H1 (cell line): ENCODE measurements at regions of chr17 and their contacts with region 1.

Region 1: DNA sequence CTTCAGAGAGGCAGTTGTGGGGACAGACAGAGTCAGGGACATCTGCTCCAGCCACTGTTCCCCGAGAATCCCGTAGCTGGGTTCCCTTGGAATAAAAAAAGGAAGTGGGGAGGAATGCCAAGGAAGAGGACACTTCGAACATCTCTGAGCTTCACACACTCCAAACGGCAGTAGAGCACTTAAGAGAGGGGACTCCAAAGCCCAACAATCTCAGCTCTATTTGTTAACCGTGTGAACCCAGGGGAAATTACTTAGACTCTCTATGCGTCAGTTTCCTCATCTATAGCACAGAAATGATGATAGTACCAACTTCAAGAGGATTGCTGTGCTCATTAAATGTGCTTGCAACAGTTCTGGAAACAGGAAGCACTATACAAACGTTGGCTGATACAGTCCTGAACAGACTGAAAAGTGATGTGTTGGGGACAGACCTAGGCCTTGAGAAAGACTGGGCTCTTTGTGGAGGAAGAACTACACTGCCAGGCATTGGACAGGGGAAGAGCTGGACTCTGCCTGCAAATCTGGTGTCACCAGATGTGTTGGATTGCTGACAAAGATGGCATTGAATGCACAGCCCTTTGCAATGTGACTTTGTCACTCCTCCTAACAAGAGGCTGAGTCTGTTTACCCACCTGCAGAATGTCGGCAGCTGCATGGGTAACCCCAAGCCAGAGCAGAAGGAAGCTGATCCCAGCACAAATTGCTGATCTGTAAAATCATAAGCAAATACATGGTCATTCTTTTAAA is 12.2 kb upstream of the ST6GALNAC2 start:
- DNase-seq: no peak
- H3K4me3 ChIP-seq: no peak overlapping the region
- H3K27ac ChIP-seq: no peak overlapping the region
- H3K4me1 ChIP-seq: peaks cover 0 to 7% (median 3%) of the 10 kb centered on the region in 4 experiments; a peak in 3 of 7 replicates
- H3K27me3 ChIP-seq: no peaks in the 10 kb centered on the region; a peak in 2 of 7 replicates
- CTCF ChIP-seq: no peak
- EP300 ChIP-seq: no peak
- POLR2A ChIP-seq: no peak
- RAD21 ChIP-seq: no peak

Region 2: DNA sequence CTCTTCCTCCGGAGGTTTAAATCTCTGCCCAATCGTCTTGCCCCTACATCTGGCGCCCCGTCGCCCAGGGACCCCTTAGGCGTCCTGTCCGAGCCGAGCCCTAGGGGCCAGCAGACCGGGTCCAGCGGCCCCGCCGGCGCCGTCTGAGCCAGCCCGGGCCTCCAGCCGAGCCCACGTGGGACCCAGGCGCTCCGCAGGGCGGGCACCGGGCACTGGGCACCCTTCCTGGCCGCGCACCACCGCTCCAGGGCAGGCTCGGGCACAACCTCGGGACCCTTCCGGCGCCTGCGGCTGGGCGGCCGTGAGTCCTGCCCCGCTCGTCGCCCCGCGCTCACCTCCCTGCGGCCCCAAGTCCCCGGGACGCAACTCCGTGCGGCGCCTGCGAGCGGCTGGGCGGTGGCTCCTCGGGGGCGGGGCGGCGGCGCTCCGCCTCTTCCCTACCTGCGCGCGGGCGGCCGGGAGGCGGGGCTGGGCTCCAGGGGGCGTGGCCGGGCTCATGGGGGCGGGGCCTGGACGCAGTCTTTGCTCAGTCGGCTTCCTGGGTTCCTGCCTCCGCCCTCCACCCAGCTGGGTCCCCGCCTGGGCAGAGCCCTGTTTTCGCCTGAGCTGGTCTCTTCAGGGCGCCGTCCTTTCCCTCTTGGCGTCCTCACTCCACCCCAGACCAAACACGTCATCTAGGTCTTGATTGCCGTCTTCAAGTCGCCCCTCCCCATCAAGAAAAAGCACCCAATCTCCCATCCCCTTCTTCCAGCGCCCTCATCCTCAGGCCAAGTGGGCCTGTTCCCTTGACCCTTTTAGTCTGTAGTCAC is 96.7 kb before region 1 on chr17 and contains the start of gene RHBDF2:
- CTCF ChIA-PET with region 1: no interaction called
- POLR2A ChIA-PET with region 1: no interaction called
- DNase-seq: peak; percentile 65 to 100
- H3K4me3 ChIP-seq: peak within 1 kb of the TSS; percentile 62 to 82 (median 76)
- H3K27ac ChIP-seq: no peak within 1 kb of the TSS
- H3K4me1 ChIP-seq: peaks cover 11 to 43% (median 34%) of the 10 kb centered on the region in 4 experiments
- H3K27me3 ChIP-seq: no peaks in the 10 kb centered on the region
- CTCF ChIP-seq: no peak
- EP300 ChIP-seq: no peak
- POLR2A ChIP-seq: peak in 1 of 2 experiments; percentile 71; a peak in 2 of 3 replicates
- RAD21 ChIP-seq: no peak
- total RNA-seq, gene RHBDF2: 25.9 and 26.2 TPM in 2 replicates

Region 3: GRCh38 chr17:76585818-76586593 is 11.9 kb before region 1 on chr17 and contains the start of gene ST6GALNAC2:
- CTCF ChIA-PET with region 1: interaction called, 14 read pairs
- POLR2A ChIA-PET with region 1: interaction called, 4 read pairs
- DNase-seq: peak in 1 of 2 experiments; percentile 67
- H3K4me3 ChIP-seq: peak within 1 kb of the TSS; percentile 42 to 81 (median 48)
- H3K27ac ChIP-seq: no peak within 1 kb of the TSS
- H3K4me1 ChIP-seq: peaks cover 0 to 22% (median 10%) of the 10 kb centered on the region in 4 experiments; a peak in 6 of 7 replicates
- H3K27me3 ChIP-seq: peaks cover 33 to 64% (median 51%) of the 10 kb centered on the region in 4 experiments
- CTCF ChIP-seq: no peak
- EP300 ChIP-seq: no peak
- POLR2A ChIP-seq: no peak
- RAD21 ChIP-seq: no peak; a peak in 1 of 4 replicates
- total RNA-seq, gene ST6GALNAC2: not detected in 2 replicates

Region 4: GRCh38 chr17:76612977-76613851 is 15.3 kb after region 1 on chr17:
- CTCF ChIA-PET with region 1: interaction called, 11 read pairs
- POLR2A ChIA-PET with region 1: interaction called, 5 read pairs
- DNase-seq: peak; percentile 51 to 80
- H3K4me3 ChIP-seq: no peak overlapping the region
- H3K27ac ChIP-seq: no peak overlapping the region
- H3K4me1 ChIP-seq: peaks cover 0 to 4% (median 1%) of the 10 kb centered on the region in 4 experiments; a peak in 3 of 7 replicates
- H3K27me3 ChIP-seq: no peaks in the 10 kb centered on the region
- CTCF ChIP-seq: peak; percentile 48 to 84 (median 57)
- EP300 ChIP-seq: no peak
- POLR2A ChIP-seq: no peak
- RAD21 ChIP-seq: peak; percentile 55 to 68